ENCODE measurements at regions of chr7 and their contacts with region 1.

Region 1: DNA sequence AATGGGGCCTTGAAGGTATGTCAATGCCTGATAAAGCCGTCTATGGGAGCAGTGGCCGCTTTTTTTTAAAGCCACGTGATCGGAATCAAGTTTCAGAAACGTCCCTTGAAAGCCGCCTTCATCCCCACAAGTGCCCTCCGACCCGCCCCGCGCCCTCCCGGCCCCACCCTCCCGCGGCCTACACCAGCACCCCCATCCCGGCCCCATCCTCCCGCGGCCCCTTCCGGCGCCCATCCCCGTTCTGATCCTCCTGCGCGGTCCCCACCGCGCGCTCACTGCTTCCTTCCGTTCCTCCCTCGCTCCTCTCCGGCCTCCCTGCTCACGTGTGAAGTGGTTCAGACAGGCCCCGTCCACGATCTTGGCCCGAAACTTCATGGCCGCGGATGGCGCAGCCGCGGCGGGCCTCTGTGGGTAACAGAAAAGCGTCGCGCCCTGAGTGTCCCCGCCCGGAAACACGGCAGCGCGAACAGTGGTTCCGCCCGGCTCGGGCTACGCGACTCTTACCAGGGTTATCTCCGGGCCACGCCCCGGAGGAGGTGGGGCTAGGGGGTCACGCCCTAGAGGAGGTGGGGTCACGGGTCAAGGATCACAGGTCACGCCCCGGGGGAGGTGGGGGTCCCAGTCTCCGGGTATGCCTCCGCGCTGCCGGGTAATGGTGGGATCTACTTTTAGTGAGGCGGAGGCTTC is at the start of gene HUS1:
- DNase-seq: peak; percentile 95 to 97
- ATAC-seq: peak; percentile 98
- H3K4me3 ChIP-seq: peak within 1 kb of the TSS; percentile 33 to 50
- H3K27ac ChIP-seq: peak within 1 kb of the TSS; percentile 51 to 83
- H3K4me1 ChIP-seq: peaks cover 0 to 3% of the 10 kb centered on the region in 2 donors
- H3K27me3 ChIP-seq: no peaks in the 10 kb centered on the region
- total RNA-seq, gene HUS1: 28.2 to 32.9 TPM

Region 2: GRCh38 chr7:48094751-48095562 is 115.7 kb after region 1 on chr7:
- intact Hi-C with region 1: loop called in 1 of 2 experiments (anchors 5 kb)
- DNase-seq: no peak
- ATAC-seq: no peak
- H3K4me3 ChIP-seq: no peak overlapping the region
- H3K27ac ChIP-seq: peak overlapping the region in 1 of 2 donors; percentile 47
- H3K4me1 ChIP-seq: no peaks in the 10 kb centered on the region
- H3K27me3 ChIP-seq: no peaks in the 10 kb centered on the region

Measured in aorta (tissue), 5 donors.